ENCODE measurements at regions of chr15 and their contacts with region 1.

Region 1: GRCh38 chr15:83011271-83012075 is at the start of gene C15orf40:
- DNase-seq: peak; percentile 48 to 92
- H3K4me3 ChIP-seq: peak within 1 kb of the TSS; percentile 87 to 96
- H3K27ac ChIP-seq: peak within 1 kb of the TSS; percentile 74 to 79
- H3K4me1 ChIP-seq: peaks cover 9 to 15% of the 10 kb centered on the region in 2 donors
- H3K27me3 ChIP-seq: no peaks in the 10 kb centered on the region
- CTCF ChIP-seq: peak; percentile 46 to 81 (median 80)
- total RNA-seq, gene C15orf40: 1.3 TPM

Region 2: DNA sequence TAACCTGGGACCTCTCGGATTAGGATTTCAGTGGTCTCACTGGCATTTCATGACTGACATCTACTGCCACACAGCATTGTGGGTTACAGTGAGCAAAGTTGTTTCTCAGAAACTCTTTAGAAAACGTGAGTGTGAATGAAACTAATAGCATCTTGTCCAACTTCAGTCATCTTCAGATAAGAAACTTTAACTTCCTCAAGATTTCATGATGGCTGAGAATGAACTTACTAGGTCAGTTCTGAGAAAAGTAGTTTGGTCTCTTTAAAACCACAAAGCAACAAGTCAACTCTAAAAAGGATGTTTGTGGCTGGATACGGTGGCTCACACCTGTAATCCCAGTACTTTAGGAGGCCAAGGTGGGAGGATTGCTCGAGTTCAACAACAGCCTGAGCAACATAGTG is 44.8 kb before region 1 on chr15:
- intact Hi-C with region 1: no loop called
- DNase-seq: no peak
- H3K4me3 ChIP-seq: no peak overlapping the region
- H3K27ac ChIP-seq: no peak overlapping the region
- H3K4me1 ChIP-seq: no peaks in the 10 kb centered on the region
- H3K27me3 ChIP-seq: no peaks in the 10 kb centered on the region
- CTCF ChIP-seq: no peak

Region 3: DNA sequence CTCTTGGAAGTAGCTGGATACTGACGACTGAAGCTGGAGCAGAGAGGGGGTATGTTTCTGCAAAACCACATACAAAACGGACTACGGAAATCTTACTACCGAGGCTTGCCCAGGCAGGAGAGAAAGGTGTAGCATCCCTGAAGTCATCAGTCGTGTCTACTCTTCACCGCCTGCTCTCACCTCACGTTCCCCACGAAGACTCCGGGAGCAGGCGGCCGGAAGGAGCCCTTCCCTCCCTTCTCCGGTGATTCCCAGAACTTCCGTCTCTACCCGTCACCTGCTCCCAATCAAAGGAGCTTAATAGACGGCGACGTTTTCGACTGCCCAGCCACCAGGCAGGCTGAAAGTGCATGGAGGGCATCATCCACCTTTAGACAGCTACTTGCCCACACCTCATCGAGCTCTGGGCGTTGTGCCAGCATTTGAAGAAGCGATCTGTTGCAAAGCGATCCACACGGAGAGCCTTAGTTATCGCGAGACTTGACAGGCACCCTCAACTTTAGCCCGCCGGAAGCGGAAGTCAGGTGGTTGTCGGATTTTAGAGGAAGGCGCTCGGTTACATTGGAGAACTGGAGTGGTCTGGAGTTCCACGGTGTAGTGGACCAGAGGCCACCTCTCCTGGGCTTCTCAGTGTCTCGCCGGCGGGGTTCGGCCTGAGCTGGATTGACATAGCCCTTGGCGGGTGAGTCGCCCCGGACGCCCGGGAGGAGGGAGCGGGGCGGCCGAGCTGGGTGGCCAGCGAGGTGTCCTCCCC is 25.6 kb before region 1 on chr15 and contains the start of gene RAMAC:
- intact Hi-C with region 1: loop called (anchors 1 kb)
- DNase-seq: peak; percentile 83 to 97
- H3K4me3 ChIP-seq: peak within 1 kb of the TSS; percentile 78 to 89
- H3K27ac ChIP-seq: peak within 1 kb of the TSS; percentile 63 to 72
- H3K4me1 ChIP-seq: peaks cover 0 to 14% of the 10 kb centered on the region in 2 donors
- H3K27me3 ChIP-seq: no peaks in the 10 kb centered on the region
- CTCF ChIP-seq: no peak
- total RNA-seq, gene RAMAC: 4.8 TPM

Region 4: DNA sequence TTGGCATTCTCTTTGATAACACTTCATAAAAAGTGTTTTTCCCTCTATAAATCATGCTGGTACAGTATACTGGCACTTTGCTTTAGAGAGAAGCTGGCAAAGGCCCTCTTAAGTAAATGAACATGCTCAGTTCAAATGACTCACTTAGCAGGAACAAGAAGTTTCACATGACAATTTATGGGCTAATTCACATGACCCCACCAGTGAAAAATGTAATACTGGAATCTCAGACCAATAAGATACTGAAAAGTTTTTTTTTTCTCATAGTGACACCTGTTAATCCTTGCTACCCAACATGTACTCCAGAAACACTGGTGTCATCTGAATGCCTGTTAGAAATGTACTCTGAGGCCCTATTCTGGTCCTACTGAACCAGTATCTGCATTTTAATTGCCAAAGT is 41.7 kb after region 1 on chr15:
- intact Hi-C with region 1: loop called (anchors 5 kb)
- DNase-seq: no peak
- H3K4me3 ChIP-seq: no peak overlapping the region
- H3K27ac ChIP-seq: peak overlapping the region; percentile 21 to 78
- H3K4me1 ChIP-seq: peaks cover 0 to 12% of the 10 kb centered on the region in 2 donors
- H3K27me3 ChIP-seq: no peaks in the 10 kb centered on the region
- CTCF ChIP-seq: no peak

Region 5: DNA sequence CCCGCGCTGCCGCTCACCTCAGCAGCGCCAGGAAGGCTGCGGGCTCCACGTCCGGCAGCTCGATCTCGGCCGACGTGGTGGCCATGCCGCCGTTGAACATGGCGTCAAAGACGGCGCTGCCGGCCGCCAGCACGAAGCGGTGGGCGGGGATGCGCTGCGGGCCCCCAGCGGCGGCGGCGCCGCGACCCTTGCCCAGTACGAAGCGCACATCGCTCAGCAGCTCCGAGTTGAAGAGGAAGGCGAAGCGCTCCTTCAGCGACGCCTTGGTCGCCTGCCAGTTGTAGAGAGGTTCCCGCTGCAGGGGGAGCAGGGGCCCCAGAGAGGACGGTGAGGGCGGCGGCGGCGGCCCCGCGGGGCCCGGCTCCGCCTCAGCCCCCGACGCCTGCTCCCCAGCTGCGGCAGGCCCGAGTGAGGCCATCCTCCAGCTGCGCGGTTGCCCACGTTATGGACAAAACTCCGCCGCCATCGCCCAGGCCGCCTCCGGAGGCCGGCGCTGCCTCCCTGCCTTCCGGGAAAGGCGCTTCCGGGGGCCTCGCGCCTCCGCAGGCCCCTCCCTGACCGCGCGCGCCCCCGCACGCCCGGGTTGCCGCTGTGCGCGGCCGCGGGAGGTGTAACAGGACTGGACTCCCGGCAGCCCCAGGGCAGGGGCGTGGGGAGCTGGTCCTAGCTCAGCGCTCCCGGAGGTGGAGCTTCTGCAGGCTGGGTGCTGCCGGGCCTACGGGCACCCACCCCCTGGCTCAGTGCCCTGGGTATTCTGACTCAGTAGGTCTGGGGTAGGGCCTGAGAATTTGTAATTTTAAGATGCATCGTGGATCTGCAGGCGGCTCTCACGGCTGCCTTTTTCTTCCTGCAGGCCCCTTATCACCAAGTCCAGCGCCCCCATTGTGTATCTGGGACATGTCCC is 55.5 kb after region 1 on chr15 and contains the start of gene BTBD1:
- intact Hi-C with region 1: loop called (anchors 1 kb)
- DNase-seq: peak; percentile 92 to 99
- H3K4me3 ChIP-seq: peak within 1 kb of the TSS; percentile 91 to 98
- H3K27ac ChIP-seq: peak within 1 kb of the TSS; percentile 97 to 99
- H3K4me1 ChIP-seq: peaks cover 17 to 25% of the 10 kb centered on the region in 2 donors
- H3K27me3 ChIP-seq: no peaks in the 10 kb centered on the region
- CTCF ChIP-seq: peak in 1 of 3 experiments; percentile 5
- total RNA-seq, gene BTBD1: 63.9 TPM

Region 6: DNA sequence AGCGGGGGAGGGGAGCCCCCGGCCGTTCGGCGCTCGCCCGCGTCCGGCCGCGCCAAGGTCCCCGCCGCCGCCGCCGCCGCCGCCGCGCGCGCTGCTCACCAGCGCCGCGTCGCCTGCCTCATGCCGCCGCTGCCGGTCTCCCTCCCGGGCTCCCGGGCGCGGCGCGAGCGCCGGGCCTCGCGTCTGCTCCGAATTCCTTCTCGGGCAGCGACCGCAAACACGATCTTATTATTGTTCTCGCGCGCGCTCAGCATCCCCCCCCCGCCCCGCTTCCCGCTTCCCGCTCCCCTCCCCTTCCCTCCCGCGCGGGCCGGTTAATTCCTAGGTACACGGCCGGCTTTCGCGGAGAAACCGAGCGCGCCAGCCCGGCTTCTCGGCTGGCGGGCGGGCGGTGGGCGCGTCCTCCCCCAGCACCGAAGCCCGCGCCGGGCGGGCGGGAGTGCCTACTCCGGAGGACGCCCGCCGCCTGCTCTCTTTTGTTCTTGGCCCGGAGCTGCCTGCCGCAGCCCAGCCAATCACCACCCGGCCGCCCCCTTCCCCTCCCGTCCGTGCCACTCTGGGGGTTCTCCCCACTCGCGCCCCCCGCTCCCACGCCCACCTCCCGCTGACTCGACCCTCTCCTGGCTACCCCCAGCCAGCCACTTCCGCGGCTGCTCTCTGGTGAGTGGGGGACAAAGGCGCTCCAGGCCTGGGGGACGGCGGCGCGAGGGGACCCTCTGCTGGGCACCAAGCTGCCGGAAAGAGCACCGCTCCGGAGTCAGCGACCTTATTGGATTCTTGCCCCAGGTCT is 196.3 kb after region 1 on chr15 and contains the start of gene HDGFL3:
- intact Hi-C with region 1: loop called (anchors 2 kb)
- DNase-seq: peak in 1 of 2 donors; percentile 73
- H3K4me3 ChIP-seq: peak within 1 kb of the TSS; percentile 79 to 100
- H3K27ac ChIP-seq: peak within 1 kb of the TSS; percentile 89 to 100
- H3K4me1 ChIP-seq: peaks cover 4% of the 10 kb centered on the region in 2 donors
- H3K27me3 ChIP-seq: no peaks in the 10 kb centered on the region
- CTCF ChIP-seq: no peak
- total RNA-seq, gene HDGFL3: 20.8 TPM

Measured in ascending aorta (tissue), 2 donors.